ENCODE measurements at regions of chr16 and their contacts with region 1.

Region 1: GRCh38 chr16:29805378-29806098 is 791 bp upstream of the MAZ start:
- DNase-seq: peak; percentile 97
- ATAC-seq: peak; percentile 74 to 75
- H3K4me3 ChIP-seq: peak overlapping the region; percentile 61 to 92 (median 80)
- H3K27ac ChIP-seq: peak overlapping the region; percentile 87 to 99 (median 96)
- H3K4me1 ChIP-seq: peaks cover 41 to 44% of the 10 kb centered on the region in 2 donors
- H3K27me3 ChIP-seq: no peaks in the 10 kb centered on the region
- CTCF ChIP-seq: peak in 1 of 5 experiments; percentile 39
- POLR2A ChIP-seq: peak; percentile 93 to 95

Region 2: DNA sequence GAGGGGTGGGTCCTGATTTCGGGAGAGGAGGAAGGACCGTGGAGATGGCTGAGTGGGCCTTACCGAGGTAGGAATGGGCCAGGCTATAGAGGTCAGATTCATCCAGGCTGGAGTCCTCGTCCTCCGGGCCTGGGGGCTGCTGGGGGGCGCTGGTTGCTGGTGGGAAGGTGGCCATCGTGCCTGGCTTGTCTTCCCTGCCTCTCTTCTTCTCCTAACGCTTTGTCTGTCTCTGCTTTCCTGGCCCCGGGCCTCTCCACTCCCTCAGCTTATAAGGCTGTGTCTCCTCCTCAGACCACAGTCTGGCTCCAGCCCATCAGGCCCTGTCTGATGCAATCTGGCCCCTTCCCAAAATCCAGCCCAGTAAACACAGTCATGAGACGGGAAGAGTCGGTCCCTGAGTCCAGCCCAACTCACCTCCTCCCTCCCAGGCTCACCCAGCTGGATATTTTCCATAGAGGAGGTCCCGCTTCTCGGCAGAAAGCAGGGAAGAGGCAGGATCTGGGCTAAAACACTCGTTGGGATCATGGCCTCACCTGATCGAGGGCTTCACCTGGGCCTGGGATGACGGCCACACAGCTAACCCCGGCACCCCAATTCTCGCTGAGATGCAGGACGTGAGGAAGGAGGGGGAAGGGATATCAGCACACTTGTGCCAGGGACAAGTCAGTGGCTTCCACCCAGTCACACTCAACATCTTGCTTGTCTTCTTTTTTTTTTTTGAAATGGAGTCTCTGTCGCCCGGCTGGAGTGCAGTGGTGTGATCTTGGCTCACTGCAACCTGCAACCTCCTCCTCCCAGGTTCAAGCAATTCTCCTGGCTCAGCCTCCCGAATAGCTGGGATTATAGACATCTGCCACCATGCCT is 1266.6 kb before region 1 on chr16 and contains the start of gene NUPR1:
- in situ Hi-C with region 1: no loop called
- intact Hi-C with region 1: loop called (anchors 5 kb)
- DNase-seq: peak; percentile 98 to 99
- ATAC-seq: peak; percentile 84 to 85
- H3K4me3 ChIP-seq: peak within 1 kb of the TSS; percentile 66 to 79 (median 68)
- H3K27ac ChIP-seq: peak within 1 kb of the TSS; percentile 98 to 99 (median 99)
- H3K4me1 ChIP-seq: peaks cover 22 to 35% of the 10 kb centered on the region in 2 donors
- H3K27me3 ChIP-seq: no peaks in the 10 kb centered on the region
- CTCF ChIP-seq: no peak
- POLR2A ChIP-seq: peak; percentile 91 to 96
- total RNA-seq, gene NUPR1: 18.7 to 44.3 (median 22.6) TPM

Region 3: GRCh38 chr16:29790183-29790952 is 15.2 kb before region 1 on chr16 and contains the start of gene KIF22:
- in situ Hi-C with region 1: no loop called
- intact Hi-C with region 1: loop called (anchors 1 kb)
- DNase-seq: peak; percentile 99
- ATAC-seq: peak; percentile 96 to 98
- H3K4me3 ChIP-seq: peak within 1 kb of the TSS; percentile 91 to 95 (median 92)
- H3K27ac ChIP-seq: peak within 1 kb of the TSS; percentile 89 to 95 (median 93)
- H3K4me1 ChIP-seq: peaks cover 18 to 24% of the 10 kb centered on the region in 2 donors
- H3K27me3 ChIP-seq: no peaks in the 10 kb centered on the region
- CTCF ChIP-seq: peak; percentile 68 to 89 (median 79)
- POLR2A ChIP-seq: peak; percentile 51 to 60
- total RNA-seq, gene KIF22: 9.0 to 13.9 (median 12.8) TPM

Region 4: DNA sequence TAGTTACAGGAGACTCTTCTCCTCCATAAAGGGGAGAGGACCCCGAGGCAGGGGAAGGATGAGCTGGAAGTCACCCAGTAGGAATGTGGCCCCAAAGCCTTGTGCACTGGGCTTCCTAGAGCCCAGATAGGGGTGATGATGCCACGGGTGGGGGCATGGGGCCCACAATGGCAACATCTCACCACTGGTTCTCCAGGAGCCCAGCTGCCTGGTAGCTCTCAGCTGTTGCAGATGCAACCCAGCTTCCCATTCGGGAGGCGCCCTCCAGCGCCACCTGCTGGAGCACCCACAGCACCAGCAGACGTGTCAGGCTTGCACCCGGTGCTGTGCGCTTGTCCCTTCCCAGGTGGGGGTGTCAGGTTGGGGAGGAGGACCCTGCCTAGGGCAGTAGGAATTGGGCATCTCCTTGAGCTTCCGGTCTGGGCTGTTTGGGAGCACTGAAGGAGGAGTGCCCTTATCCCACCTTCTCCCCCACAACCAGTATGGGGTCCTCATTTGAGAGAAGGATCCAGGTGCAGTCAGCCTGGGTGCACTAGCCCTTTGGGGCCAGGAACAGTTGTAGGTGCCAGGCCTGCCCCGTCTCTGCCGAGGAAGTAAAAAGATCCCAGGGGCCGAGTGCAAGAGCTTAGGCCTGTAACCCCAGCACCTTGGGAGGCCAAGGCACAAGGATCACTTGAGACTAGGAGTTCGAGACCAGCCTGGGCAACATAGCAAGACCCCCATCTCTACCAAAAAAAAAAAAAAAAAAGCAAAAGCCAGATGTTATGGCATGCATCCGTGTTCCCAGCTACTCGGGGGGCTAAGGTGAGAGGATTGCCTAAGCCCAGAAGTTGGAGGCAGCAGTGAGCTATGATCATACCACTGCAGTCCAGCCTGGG is 43.1 kb after region 1 on chr16:
- in situ Hi-C with region 1: no loop called
- intact Hi-C with region 1: loop called (anchors 1 kb)
- DNase-seq: peak; percentile 33 to 50
- ATAC-seq: peak; percentile 50 to 87
- H3K4me3 ChIP-seq: no peak overlapping the region
- H3K27ac ChIP-seq: no peak overlapping the region
- H3K4me1 ChIP-seq: no peaks in the 10 kb centered on the region
- H3K27me3 ChIP-seq: no peaks in the 10 kb centered on the region
- CTCF ChIP-seq: peak; percentile 72 to 93 (median 84)
- POLR2A ChIP-seq: no peak

Region 5: DNA sequence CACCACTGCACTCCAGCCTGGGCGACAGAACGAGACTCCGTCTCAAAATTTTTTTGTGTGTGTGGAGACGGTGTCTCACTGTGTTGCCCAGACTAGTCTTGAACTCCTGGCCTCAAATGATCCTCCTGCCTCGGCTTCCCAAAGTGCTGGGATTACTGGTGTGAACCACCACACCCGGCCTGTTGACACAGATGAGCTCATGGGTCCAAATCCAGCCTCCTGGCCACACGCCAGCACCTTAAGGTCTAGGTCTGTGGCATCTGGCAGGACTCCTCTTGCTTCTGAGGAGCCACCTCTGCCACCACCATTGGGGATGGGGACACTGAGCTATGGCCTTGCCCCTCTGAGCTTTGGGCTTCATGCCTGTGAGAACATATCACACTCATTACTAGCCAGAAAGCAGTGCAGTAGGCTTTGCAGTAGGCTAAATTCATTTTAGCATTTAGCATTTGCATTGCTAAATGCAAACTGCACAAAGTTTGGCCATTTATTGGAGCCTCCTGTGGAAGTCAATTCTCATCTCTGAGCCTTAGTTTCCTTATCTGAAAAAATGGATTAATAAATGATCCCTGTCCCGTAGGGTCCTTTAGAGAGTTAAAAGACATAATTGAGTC is 63.0 kb after region 1 on chr16:
- in situ Hi-C with region 1: no loop called
- intact Hi-C with region 1: no loop called
- DNase-seq: no peak
- ATAC-seq: no peak
- H3K4me3 ChIP-seq: no peak overlapping the region
- H3K27ac ChIP-seq: no peak overlapping the region
- H3K4me1 ChIP-seq: peaks cover 4% of the 10 kb centered on the region in 2 donors
- H3K27me3 ChIP-seq: no peaks in the 10 kb centered on the region
- CTCF ChIP-seq: no peak
- POLR2A ChIP-seq: no peak

Region 6: GRCh38 chr16:30650369-30651123 is 845.0 kb after region 1 on chr16 and contains the start of gene PRR14:
- in situ Hi-C with region 1: no loop called
- intact Hi-C with region 1: loop called (anchors 5 kb)
- DNase-seq: peak; percentile 100
- ATAC-seq: peak; percentile 90 to 91
- H3K4me3 ChIP-seq: peak within 1 kb of the TSS; percentile 83 to 96 (median 93)
- H3K27ac ChIP-seq: peak within 1 kb of the TSS; percentile 94 to 99 (median 98)
- H3K4me1 ChIP-seq: peaks cover 6 to 18% of the 10 kb centered on the region in 2 donors
- H3K27me3 ChIP-seq: no peaks in the 10 kb centered on the region
- CTCF ChIP-seq: peak in 4 of 5 experiments; percentile 38 to 69 (median 48)
- POLR2A ChIP-seq: peak in 1 of 2 donors; percentile 74
- total RNA-seq, gene PRR14: 8.8 to 28.4 (median 17.8) TPM

Measured in gastrocnemius medialis (tissue), 4 donors.